GM12878 (cell line): ENCODE measurements at regions of chr10 and their contacts with region 1.

Region 1: GRCh38 chr10:100185364-100186252 is at the start of gene ERLIN1:
- DNase-seq: peak; percentile 61
- ATAC-seq: peak; percentile 95
- H3K4me3 ChIP-seq: peak within 1 kb of the TSS; percentile 91
- H3K27ac ChIP-seq: peak within 1 kb of the TSS; percentile 83
- H3K4me1 ChIP-seq: no peaks in the 10 kb centered on the region; the same call in 1 of the 2 replicates
- H3K27me3 ChIP-seq: no peaks in the 10 kb centered on the region
- CTCF ChIP-seq: no peak
- EP300 ChIP-seq: peak in 1 of 2 experiments; percentile 26; a peak in 1 of 4 replicates
- POLR2A ChIP-seq: peak; percentile 85
- RAD21 ChIP-seq: no peak
- polyA plus RNA-seq, gene ERLIN1: 4.9 to 5.8 TPM

Region 2: DNA sequence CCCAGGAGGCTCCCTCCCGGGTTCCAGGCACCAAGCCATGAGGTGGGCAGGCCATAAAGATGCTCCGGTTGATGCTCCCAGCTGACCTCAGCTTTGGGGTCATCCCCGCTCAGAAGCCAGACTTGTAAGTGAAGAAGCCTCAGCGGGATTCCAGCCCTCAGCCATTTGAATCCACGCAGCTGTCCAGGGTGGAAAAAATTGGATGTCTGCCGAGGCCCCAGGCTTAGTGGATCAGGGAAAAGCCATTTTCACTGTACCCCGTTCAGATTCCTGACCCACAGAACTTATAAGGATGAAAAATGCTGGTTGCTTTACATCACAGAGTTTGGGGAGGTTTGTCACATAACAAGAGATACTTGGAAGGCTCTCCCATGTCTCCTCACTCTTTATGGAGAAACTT is 54.8 kb before region 1 on chr10:
- CTCF ChIA-PET with region 1: no interaction called
- POLR2A ChIA-PET with region 1: no interaction called
- RAD21 ChIA-PET with region 1: no interaction called
- SMC1A ChIA-PET with region 1: no interaction called
- in situ Hi-C with region 1: no loop called
- intact Hi-C with region 1: no loop called
- DNase-seq: no peak
- ATAC-seq: no peak
- H3K4me3 ChIP-seq: no peak overlapping the region
- H3K27ac ChIP-seq: no peak overlapping the region
- H3K4me1 ChIP-seq: no peaks in the 10 kb centered on the region
- H3K27me3 ChIP-seq: no peaks in the 10 kb centered on the region
- CTCF ChIP-seq: no peak
- EP300 ChIP-seq: no peak
- POLR2A ChIP-seq: no peak
- RAD21 ChIP-seq: no peak

Region 3: DNA sequence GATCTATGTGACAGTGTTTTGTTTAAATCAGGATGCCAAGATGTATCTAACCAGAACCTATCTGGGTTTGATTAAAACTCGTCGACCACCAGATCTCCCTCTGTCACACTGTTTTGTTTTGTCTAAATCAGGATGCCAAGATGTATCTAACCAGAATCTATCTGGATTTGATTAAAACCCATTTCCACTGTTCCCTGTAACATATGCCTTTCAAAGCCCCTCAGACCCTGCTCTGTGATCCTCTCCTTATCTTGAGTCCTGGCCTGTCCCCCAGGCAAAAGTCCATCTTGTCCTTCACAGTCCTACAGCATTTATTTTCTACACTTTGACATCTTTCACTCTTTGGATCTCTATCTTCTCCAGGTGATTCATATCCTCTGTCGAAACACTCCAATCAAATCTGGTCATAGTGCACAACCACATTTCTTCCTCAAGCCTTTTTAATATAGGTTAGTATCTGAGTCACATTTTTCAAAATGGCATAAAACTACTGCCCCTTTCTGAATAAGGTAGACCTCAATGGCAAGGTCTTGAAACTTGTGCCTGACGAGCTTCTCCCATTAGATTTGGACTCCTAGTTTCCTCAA is 32.3 kb before region 1 on chr10:
- CTCF ChIA-PET with region 1: interaction called, 4 read pairs
- POLR2A ChIA-PET with region 1: interaction called, 3 read pairs
- RAD21 ChIA-PET with region 1: interaction called, 3 read pairs
- SMC1A ChIA-PET with region 1: interaction called, 13 read pairs
- in situ Hi-C with region 1: no loop called
- intact Hi-C with region 1: no loop called
- DNase-seq: no peak
- ATAC-seq: no peak
- H3K4me3 ChIP-seq: no peak overlapping the region
- H3K27ac ChIP-seq: no peak overlapping the region
- H3K4me1 ChIP-seq: peaks cover 30% of the 10 kb centered on the region
- H3K27me3 ChIP-seq: no peaks in the 10 kb centered on the region
- CTCF ChIP-seq: no peak
- EP300 ChIP-seq: no peak
- POLR2A ChIP-seq: no peak
- RAD21 ChIP-seq: no peak

Region 4: GRCh38 chr10:100174699-100175677 is 10.6 kb before region 1 on chr10:
- CTCF ChIA-PET with region 1: interaction called, 5 read pairs
- POLR2A ChIA-PET with region 1: interaction called, 7 read pairs
- RAD21 ChIA-PET with region 1: interaction called, 4 read pairs
- SMC1A ChIA-PET with region 1: interaction called, 15 read pairs
- in situ Hi-C with region 1: no loop called
- intact Hi-C with region 1: no loop called
- DNase-seq: peak; percentile 42
- ATAC-seq: peak; percentile 95
- H3K4me3 ChIP-seq: no peak overlapping the region
- H3K27ac ChIP-seq: 0 out of 2 replicates have a peak overlapping the region, but pooled peaks have one; percentile 13
- H3K4me1 ChIP-seq: peaks cover 20% of the 10 kb centered on the region
- H3K27me3 ChIP-seq: no peaks in the 10 kb centered on the region
- CTCF ChIP-seq: no peak
- EP300 ChIP-seq: peak in 1 of 2 experiments; percentile 22; a peak in 1 of 4 replicates
- POLR2A ChIP-seq: no peak
- RAD21 ChIP-seq: no peak